HEK293 (cell line): ENCODE measurements at regions of chr11 and their contacts with region 1.

Region 1: GRCh38 chr11:6667733-6668374 is 12.2 kb upstream of the DCHS1 start:
- H3K4me3 ChIP-seq: no peak overlapping the region
- H3K27ac ChIP-seq: no peak overlapping the region
- H3K4me1 ChIP-seq: no peaks in the 10 kb centered on the region
- CTCF ChIP-seq: no peak

Region 2: GRCh38 chr11:6481012-6481923 is 186.6 kb before region 1 on chr11 and contains the starts of genes ARFIP2 and TIMM10B:
- CTCF ChIA-PET with region 1: no interaction called
- POLR2A ChIA-PET with region 1: no interaction called
- H3K4me3 ChIP-seq: peak within 1 kb of the TSS; percentile 73
- H3K27ac ChIP-seq: peak within 1 kb of the TSS; percentile 28
- H3K4me1 ChIP-seq: no peaks in the 10 kb centered on the region
- CTCF ChIP-seq: no peak

Region 3: DNA sequence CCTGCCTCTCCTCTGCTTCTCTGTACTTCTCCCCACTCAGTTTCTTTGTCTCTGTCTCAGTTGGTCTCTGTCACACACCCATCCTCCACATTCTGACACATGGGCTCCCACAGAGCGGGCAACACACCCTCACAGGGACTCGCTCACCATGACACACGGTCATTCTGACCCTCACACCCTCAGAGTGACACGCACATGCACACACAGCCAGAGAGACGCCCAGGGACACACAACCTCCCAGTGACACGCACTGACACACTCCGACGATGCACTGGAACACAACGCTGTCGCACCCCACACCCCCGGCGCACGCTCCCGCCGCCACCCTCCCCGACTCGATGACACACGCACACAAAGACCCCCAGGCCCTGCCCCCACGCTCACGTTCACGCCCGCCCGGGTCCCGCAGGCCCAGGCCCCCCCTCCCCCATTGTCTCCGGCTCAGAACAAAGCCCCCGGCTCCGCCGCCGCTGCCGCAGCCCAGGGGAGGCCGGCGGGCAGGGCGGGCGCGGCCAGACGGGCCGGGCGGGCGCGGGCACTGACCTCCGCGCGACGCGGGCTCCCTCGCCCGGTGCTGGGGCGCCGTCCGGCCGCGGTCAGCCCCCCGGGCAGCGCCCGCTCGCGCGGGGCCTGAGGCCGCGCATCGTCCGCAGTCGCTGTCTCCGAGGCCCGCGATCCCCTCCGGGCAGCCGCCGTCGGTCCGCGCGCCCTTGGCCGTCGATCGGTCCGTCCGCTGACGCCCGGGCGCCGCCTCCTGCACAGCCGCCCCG is 12.6 kb before region 1 on chr11:
- CTCF ChIA-PET with region 1: interaction called, 13 read pairs
- POLR2A ChIA-PET with region 1: no interaction called
- H3K4me3 ChIP-seq: peak overlapping the region; percentile 18
- H3K27ac ChIP-seq: no peak overlapping the region
- H3K4me1 ChIP-seq: no peaks in the 10 kb centered on the region
- CTCF ChIP-seq: no peak

Region 4: DNA sequence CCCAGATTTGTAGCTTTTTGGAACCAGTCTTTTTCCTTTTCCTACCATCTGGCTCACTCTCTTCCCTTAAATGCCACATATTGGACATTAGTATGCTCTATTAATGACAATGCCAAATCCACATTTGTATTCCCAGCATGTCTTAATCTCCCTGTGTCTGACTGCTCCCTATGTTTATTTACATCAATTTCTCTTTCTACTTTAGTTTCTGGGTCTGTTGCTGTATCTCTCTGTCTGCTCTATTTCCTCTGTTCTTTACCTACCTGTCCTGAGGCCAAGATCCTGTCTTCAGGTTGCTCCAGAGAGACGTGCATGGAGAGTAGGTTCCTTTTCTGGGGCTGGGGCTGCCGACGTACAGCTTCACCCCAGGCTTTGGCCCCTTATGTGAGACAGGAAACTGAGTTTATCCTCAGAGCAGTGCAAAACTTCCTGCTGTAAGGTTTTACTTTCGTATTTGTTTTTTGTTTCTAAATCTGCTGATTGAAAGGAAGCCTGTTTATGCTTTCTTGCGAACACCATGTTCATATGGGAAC is 78.3 kb after region 1 on chr11:
- CTCF ChIA-PET with region 1: no interaction called
- POLR2A ChIA-PET with region 1: no interaction called
- H3K4me3 ChIP-seq: no peak overlapping the region
- H3K27ac ChIP-seq: no peak overlapping the region
- H3K4me1 ChIP-seq: no peaks in the 10 kb centered on the region
- CTCF ChIP-seq: no peak

Region 5: DNA sequence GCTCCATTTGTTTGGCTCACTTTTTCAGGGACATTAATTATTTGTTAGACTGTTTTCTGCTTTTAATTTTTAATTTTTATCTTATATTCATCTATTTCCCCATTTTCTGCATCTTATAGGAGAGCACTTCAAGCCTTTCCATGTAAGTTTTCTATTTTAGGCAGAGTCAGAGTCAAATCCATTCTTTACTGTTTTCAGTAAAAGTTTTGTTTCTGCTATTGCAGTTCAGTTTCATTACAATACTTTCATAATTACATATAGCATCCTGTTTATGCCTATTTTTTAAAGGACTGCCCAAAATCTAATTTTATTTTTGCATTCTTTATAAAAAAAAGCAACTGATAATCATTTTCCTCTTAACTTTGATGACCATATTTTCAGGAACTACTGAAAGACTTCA is 173.8 kb after region 1 on chr11:
- CTCF ChIA-PET with region 1: no interaction called
- POLR2A ChIA-PET with region 1: no interaction called
- H3K4me3 ChIP-seq: no peak overlapping the region
- H3K27ac ChIP-seq: no peak overlapping the region
- H3K4me1 ChIP-seq: no peaks in the 10 kb centered on the region
- CTCF ChIP-seq: no peak